ENCODE measurements at regions of chr1 and their contacts with region 1.

Region 1: GRCh38 chr1:234963180-234963903 is 165.3 kb downstream of the TOMM20 start:
- DNase-seq: peak; percentile 84
- ATAC-seq: peak; percentile 89
- H3K4me3 Mint-ChIP-seq: peak overlapping the region; percentile 82
- H3K27ac Mint-ChIP-seq: peak overlapping the region; percentile 98
- H3K4me1 Mint-ChIP-seq: peaks cover 66% of the 10 kb centered on the region
- H3K27me3 Mint-ChIP-seq: no peaks in the 10 kb centered on the region
- CTCF ChIP-seq: no peak

Region 2: DNA sequence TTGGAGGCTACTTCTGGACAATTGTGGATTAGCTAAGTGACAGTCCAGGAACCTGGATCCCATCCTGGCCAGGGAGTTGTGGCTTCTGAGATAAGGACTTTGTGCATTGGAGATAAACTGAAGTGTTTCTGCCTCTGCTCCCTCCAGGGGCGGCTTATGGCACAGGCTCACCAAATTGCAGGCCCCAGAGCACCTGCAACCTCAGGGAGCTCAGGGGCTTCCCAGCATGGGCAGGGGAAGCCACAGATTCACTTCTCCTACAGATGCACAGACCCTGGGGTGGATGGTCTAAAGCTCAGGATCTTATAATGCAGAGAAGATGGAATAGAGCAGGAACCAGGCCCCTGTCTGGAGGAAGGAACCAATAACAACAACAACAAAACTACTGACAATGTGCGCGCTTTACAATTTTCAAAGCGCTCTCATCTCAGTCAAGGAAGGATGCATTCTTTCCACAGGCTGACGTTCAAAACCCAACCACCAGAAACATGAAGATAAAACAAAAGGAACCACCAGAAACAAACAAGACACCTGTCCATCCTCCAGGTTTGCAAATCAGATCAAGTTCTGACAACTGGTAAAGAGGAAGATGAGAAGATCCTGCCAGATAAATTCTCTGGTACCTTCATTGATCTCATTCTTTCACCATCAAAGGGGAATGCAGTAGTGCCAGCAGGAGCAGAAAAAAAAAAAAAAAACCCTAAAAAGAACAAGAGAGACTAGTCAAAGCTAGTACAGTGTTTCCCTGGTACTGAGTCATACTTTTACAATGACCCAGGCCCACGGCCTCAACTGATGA is 232.4 kb before region 1 on chr1:
- CTCF ChIA-PET with region 1: interaction called, 4 read pairs
- POLR2A ChIA-PET with region 1: interaction called, 6 read pairs
- intact Hi-C with region 1: loop called (anchors 5 kb)
- DNase-seq: peak; percentile 37
- ATAC-seq: peak; percentile 81
- H3K4me3 Mint-ChIP-seq: peak overlapping the region; percentile 44
- H3K27ac Mint-ChIP-seq: peak overlapping the region; percentile 79
- H3K4me1 Mint-ChIP-seq: peaks cover 46% of the 10 kb centered on the region
- H3K27me3 Mint-ChIP-seq: no peaks in the 10 kb centered on the region
- CTCF ChIP-seq: no peak

Region 3: GRCh38 chr1:234881893-234882771 is 81.2 kb before region 1 on chr1:
- CTCF ChIA-PET with region 1: no interaction called
- POLR2A ChIA-PET with region 1: interaction called, 4 read pairs
- intact Hi-C with region 1: loop called (anchors 1 kb)
- DNase-seq: no peak
- ATAC-seq: peak; percentile 70
- H3K4me3 Mint-ChIP-seq: peak overlapping the region; percentile 75
- H3K27ac Mint-ChIP-seq: peak overlapping the region; percentile 82
- H3K4me1 Mint-ChIP-seq: peaks cover 46% of the 10 kb centered on the region
- H3K27me3 Mint-ChIP-seq: no peaks in the 10 kb centered on the region
- CTCF ChIP-seq: no peak

Region 4: DNA sequence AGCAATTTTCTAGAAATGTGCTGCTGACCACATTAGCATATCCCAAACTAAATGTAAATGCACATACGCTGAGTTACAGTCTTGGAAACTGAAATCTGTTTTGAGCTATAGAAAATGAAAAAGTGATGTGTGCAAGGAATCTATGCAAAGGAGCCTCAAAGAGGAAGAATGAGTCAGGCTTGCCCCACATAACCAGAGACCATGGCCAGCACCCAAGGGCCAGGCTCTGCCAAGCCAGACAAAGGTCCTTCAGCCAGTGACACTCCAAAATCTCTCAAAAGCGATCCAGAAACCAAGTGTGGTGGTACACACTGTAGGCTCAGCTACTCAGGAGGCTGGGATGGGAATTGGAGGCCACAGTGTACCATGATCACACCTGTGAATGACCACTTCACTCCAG is 29.9 kb before region 1 on chr1:
- CTCF ChIA-PET with region 1: no interaction called
- POLR2A ChIA-PET with region 1: interaction called, 5 read pairs
- intact Hi-C with region 1: loop called (anchors 1 kb)
- DNase-seq: no peak
- ATAC-seq: peak; percentile 86
- H3K4me3 Mint-ChIP-seq: peak overlapping the region; percentile 50
- H3K27ac Mint-ChIP-seq: peak overlapping the region; percentile 70
- H3K4me1 Mint-ChIP-seq: peaks cover 21% of the 10 kb centered on the region
- H3K27me3 Mint-ChIP-seq: no peaks in the 10 kb centered on the region
- CTCF ChIP-seq: no peak

Region 5: DNA sequence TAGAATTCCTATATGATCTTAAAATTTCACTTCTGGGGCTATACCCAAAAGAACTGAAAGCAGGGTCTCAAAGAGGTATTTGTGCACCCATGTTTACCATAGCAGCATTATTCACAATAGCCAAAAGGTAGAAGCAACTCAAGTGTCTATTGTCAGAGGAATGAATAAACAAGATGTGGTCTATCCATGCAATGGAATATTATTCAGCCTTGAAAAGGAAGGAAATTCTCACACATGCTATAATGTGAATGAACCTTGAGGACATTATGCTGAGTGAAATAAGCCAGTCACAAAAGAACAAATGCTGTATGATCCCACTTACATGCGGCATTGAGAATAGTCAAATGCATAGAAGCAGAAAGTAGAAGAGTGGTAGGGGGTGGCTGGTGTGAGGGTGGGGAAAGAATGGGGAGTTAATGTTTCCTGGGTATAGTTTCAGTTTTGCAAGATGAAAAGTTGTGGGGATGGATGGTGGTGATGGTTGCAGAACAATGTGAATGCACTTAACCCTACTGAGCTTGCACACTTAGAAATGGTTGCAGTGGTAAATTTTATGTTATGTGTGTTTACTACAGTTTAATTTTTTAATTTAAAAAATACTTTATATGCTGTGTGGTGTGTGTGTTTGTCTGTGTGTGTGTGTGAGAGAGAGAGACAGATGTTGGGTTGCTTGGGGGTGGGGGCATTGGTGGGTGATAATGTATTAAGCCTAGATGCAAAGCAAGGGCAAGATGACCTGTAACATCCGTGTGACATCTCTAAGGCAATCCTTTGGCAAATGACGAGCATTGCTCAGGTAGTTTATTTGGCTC is 43.0 kb after region 1 on chr1:
- CTCF ChIA-PET with region 1: interaction called, 4 read pairs
- POLR2A ChIA-PET with region 1: interaction called, 85 read pairs
- intact Hi-C with region 1: loop called (anchors 1 kb)
- DNase-seq: no peak
- ATAC-seq: no peak
- H3K4me3 Mint-ChIP-seq: no peak overlapping the region
- H3K27ac Mint-ChIP-seq: peak overlapping the region; percentile 73
- H3K4me1 Mint-ChIP-seq: peaks cover 88% of the 10 kb centered on the region
- H3K27me3 Mint-ChIP-seq: no peaks in the 10 kb centered on the region
- CTCF ChIP-seq: no peak

Region 6: GRCh38 chr1:235050911-235051360 is 87.6 kb after region 1 on chr1:
- CTCF ChIA-PET with region 1: no interaction called
- POLR2A ChIA-PET with region 1: interaction called, 13 read pairs
- intact Hi-C with region 1: loop called (anchors 1 kb)
- DNase-seq: peak; percentile 30
- ATAC-seq: peak; percentile 51
- H3K4me3 Mint-ChIP-seq: peak overlapping the region; percentile 24
- H3K27ac Mint-ChIP-seq: peak overlapping the region; percentile 60
- H3K4me1 Mint-ChIP-seq: peaks cover 50% of the 10 kb centered on the region
- H3K27me3 Mint-ChIP-seq: no peaks in the 10 kb centered on the region
- CTCF ChIP-seq: no peak

Measured in activated B cell treated with CpG ODN at 0.5 μM for 24 hours (primary cell).